B cell (primary cell): ENCODE measurements at regions of chr3 and their contacts with region 1.

Region 1: GRCh38 chr3:58332575-58333188 is at the start of gene PXK:
- DNase-seq: peak; percentile 86
- ATAC-seq: peak; percentile 76
- H3K4me3 ChIP-seq: peak within 1 kb of the TSS; percentile 72 to 90 (median 87)
- H3K4me3 Mint-ChIP-seq: peak within 1 kb of the TSS; percentile 100
- H3K27ac ChIP-seq: peak within 1 kb of the TSS; percentile 9 to 75
- H3K27ac Mint-ChIP-seq: peak within 1 kb of the TSS; percentile 100
- H3K4me1 ChIP-seq: peaks cover 34 to 41% of the 10 kb centered on the region in 2 donors
- H3K4me1 Mint-ChIP-seq: peaks cover 50% of the 10 kb centered on the region
- H3K27me3 ChIP-seq: no peaks in the 10 kb centered on the region
- H3K27me3 Mint-ChIP-seq: no peaks in the 10 kb centered on the region
- CTCF ChIP-seq: no peak
- total RNA-seq, gene PXK: 104 and 109 TPM in 2 replicates

Region 2: GRCh38 chr3:58349792-58350626 is 17.3 kb after region 1 on chr3:
- CTCF ChIA-PET with region 1: interaction called, 349 read pairs
- POLR2A ChIA-PET with region 1: interaction called, 182 read pairs
- intact Hi-C with region 1: loop called (anchors 1 kb)
- DNase-seq: peak; percentile 84
- ATAC-seq: peak; percentile 78
- H3K4me3 ChIP-seq: peak overlapping the region; percentile 2 to 58 (median 31)
- H3K4me3 Mint-ChIP-seq: peak overlapping the region; percentile 66
- H3K27ac ChIP-seq: peak overlapping the region; percentile 80 to 97
- H3K27ac Mint-ChIP-seq: peak overlapping the region; percentile 100
- H3K4me1 ChIP-seq: peaks cover 90 to 98% of the 10 kb centered on the region in 2 donors
- H3K4me1 Mint-ChIP-seq: peaks cover 87% of the 10 kb centered on the region
- H3K27me3 ChIP-seq: no peaks in the 10 kb centered on the region
- H3K27me3 Mint-ChIP-seq: no peaks in the 10 kb centered on the region
- CTCF ChIP-seq: no peak